Mammary epithelial cell (primary cell): ENCODE measurements at regions of chr9 and their contacts with region 1.

Region 1: DNA sequence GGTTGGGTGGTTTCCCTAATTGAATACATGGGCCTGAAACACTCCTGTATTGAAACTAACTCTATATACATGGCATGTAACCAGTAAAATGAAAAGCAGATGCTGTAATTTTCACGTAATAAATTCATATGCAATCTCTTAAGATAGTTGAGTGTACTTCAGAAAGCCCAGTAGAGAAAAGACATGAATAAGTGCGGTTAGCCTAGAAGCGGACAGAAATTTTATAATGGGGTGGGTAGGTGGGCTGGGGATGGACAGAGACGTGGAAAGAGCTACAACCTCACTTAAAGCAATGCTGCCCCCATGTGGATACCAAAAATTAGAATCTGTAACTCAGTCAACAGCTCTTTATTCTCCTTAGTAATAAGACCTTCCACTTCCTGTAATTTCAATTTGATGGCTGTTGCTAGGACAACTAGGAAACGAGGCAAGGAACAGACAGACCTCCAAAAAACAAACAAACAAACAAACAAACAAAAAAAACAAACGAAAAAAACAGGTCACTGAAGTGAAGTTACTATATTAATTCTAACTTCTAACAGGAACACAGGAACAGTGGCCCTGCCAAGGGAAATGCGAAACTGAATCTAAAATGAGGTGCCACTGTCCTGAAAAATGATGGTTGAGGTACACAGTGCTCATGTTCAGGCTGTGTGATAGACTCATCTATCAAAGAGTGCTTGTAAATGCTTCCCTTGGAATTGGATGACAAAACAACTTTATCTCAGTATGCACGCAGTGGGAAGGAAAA is 103.4 kb upstream of the GNA14 start:
- DNase-seq: peak; percentile 23
- H3K4me3 ChIP-seq: no peak overlapping the region
- H3K27ac ChIP-seq: no peak overlapping the region
- H3K4me1 ChIP-seq: no peaks in the 10 kb centered on the region
- H3K27me3 ChIP-seq: no peaks in the 10 kb centered on the region
- CTCF ChIP-seq: peak; percentile 43 to 56

Region 2: DNA sequence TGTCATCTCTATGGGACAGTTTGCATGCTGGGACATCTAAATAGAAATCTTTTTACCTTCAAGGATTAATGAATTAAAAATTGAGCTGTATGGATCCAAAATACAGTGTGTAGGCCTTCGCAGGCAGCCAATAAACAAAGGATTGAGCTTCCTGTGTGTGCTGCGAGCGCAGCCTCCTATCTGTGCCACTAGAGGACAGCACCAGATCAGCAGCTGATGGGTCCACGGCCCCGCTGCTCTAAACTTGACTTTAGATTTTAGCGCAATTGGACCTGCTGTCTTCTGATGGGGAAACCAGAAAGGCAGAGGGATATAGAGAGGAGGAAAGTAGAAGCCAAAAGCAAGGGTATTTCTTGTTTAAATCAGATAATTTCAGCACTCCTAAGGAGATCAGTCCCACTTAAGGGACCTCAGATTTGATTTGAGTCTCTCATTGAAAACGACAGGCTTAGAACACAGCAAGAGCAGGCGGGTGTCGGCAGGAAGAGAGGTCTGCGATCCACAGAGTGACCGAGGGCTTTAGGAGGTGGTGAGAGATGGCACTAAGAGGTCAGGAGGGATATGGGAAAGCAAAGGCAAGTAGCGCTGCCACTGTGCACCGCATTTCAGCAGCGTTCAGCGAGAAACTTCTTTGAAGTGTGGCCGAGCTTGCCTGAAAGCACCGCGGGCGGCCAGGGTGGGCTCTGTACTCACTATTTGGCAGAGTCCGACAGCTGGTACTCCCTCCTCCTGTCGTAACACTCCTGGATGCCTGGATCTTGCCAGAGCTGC is 317.7 kb before region 1 on chr9:
- CTCF ChIA-PET with region 1: interaction called, 4 read pairs
- dilution Hi-C with region 1: no loop called
- in situ Hi-C with region 1: no loop called
- intact Hi-C with region 1: loop called (anchors 1 kb)
- DNase-seq: peak; percentile 36
- H3K4me3 ChIP-seq: no peak overlapping the region
- H3K27ac ChIP-seq: no peak overlapping the region
- H3K4me1 ChIP-seq: no peaks in the 10 kb centered on the region
- H3K27me3 ChIP-seq: no peaks in the 10 kb centered on the region
- CTCF ChIP-seq: peak; percentile 99

Region 3: DNA sequence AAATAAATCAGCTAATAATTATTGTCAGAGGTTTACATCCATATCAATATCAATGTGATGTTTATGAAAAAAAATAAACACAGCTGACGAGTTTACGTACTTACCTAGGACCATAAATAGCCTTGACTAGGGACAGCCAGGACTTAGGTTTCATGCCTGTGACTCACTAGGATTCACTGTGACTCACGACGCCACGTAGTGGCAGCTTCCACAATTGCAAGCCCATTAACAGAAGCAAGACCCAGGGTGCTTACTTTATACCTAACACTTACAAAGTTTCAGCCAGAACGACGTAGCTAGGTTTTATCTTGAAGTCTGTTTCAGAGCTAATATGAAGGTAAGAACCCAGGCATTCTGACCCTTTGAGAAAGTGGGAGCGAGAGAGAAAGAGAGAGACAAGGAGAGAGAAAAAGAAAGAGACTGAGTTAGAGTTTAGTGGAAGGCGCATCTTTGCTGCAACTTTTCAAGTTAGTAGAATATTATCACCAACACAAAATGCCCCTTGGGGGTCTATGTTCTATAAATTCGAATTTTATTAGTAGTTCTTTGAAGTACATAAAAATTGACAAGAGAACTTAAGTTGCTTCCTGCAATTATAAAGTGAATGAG is 294.6 kb before region 1 on chr9:
- CTCF ChIA-PET with region 1: no interaction called
- dilution Hi-C with region 1: no loop called
- in situ Hi-C with region 1: loop called in 1 of 2 experiments (anchors 25 kb)
- intact Hi-C with region 1: loop called (anchors 2 kb)
- DNase-seq: peak; percentile 78
- H3K4me3 ChIP-seq: no peak overlapping the region
- H3K27ac ChIP-seq: no peak overlapping the region
- H3K4me1 ChIP-seq: no peaks in the 10 kb centered on the region
- H3K27me3 ChIP-seq: no peaks in the 10 kb centered on the region
- CTCF ChIP-seq: peak; percentile 93 to 97

Region 4: DNA sequence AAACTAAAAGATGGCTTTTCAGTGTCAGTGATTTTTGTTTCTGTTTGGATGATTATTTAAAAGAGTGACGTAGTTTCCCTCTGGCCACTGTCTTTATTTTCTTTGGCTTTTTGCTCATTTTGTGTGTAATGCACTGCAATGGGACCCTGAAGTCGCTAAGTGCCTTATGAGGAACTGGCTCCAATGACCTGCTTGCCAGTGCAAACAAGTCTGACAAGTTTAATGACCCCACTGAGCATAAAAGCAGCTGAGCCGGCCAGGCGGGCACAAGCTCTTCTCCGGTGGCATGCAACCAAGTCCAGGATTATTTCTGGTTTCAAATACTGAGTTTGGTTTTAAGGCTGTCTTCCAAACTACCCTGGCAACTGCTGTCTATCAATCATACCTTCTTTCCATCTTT is 87.8 kb before region 1 on chr9:
- CTCF ChIA-PET with region 1: no interaction called
- dilution Hi-C with region 1: no loop called
- in situ Hi-C with region 1: no loop called
- intact Hi-C with region 1: loop called (anchors 1 kb)
- DNase-seq: peak; percentile 8
- H3K4me3 ChIP-seq: no peak overlapping the region
- H3K27ac ChIP-seq: no peak overlapping the region
- H3K4me1 ChIP-seq: no peaks in the 10 kb centered on the region
- H3K27me3 ChIP-seq: no peaks in the 10 kb centered on the region
- CTCF ChIP-seq: no peak

Region 5: DNA sequence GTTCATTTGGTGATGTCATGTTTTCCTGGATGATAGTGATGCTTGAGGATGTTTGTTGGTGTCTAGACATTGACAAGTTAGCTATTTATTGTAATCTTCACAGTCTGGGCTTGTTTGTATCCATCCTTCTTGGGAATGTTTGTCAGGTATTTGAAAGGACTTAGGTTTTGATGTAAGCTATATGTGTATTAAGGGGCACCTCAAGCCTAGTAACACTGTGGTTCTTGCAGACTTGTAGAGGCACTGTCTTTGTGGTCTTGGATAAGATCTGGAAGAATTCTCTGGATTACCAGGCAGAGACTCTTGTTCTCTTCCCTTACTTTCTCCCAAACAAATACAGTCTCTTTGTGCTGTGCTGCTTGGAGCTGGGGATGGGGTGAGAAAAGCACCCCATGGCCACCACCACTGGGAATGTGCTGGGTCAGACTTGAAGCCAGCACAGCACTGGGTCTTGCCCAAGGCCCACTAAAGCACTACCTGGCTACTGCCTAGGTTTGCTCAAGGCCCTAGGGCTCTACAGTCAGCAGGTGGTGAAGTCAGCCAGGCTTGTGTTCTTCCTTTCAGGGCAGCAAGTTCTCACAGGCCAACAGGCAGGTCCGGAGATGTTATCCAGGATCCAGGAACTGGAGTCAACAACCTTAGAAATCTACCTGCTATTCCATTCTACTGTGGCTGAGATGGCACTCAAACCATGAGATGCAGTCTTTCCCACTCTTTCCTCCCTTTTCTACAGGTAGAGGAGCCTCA is 54.1 kb before region 1 on chr9:
- CTCF ChIA-PET with region 1: no interaction called
- dilution Hi-C with region 1: no loop called
- in situ Hi-C with region 1: no loop called
- intact Hi-C with region 1: loop called (anchors 2 kb)
- DNase-seq: peak; percentile 83
- H3K4me3 ChIP-seq: no peak overlapping the region
- H3K27ac ChIP-seq: no peak overlapping the region
- H3K4me1 ChIP-seq: peaks cover 10% of the 10 kb centered on the region
- H3K27me3 ChIP-seq: no peaks in the 10 kb centered on the region
- CTCF ChIP-seq: no peak

Region 6: GRCh38 chr9:78121488-78121887 is 370.0 kb after region 1 on chr9:
- CTCF ChIA-PET with region 1: no interaction called
- dilution Hi-C with region 1: no loop called
- in situ Hi-C with region 1: no loop called
- intact Hi-C with region 1: loop called (anchors 10 kb)
- DNase-seq: peak; percentile 54
- H3K4me3 ChIP-seq: no peak overlapping the region
- H3K27ac ChIP-seq: no peak overlapping the region
- H3K4me1 ChIP-seq: peaks cover 28% of the 10 kb centered on the region
- H3K27me3 ChIP-seq: no peaks in the 10 kb centered on the region
- CTCF ChIP-seq: peak; percentile 80